A549 (cell line): ENCODE measurements at regions of chr9 and their contacts with region 1.

Region 1: DNA sequence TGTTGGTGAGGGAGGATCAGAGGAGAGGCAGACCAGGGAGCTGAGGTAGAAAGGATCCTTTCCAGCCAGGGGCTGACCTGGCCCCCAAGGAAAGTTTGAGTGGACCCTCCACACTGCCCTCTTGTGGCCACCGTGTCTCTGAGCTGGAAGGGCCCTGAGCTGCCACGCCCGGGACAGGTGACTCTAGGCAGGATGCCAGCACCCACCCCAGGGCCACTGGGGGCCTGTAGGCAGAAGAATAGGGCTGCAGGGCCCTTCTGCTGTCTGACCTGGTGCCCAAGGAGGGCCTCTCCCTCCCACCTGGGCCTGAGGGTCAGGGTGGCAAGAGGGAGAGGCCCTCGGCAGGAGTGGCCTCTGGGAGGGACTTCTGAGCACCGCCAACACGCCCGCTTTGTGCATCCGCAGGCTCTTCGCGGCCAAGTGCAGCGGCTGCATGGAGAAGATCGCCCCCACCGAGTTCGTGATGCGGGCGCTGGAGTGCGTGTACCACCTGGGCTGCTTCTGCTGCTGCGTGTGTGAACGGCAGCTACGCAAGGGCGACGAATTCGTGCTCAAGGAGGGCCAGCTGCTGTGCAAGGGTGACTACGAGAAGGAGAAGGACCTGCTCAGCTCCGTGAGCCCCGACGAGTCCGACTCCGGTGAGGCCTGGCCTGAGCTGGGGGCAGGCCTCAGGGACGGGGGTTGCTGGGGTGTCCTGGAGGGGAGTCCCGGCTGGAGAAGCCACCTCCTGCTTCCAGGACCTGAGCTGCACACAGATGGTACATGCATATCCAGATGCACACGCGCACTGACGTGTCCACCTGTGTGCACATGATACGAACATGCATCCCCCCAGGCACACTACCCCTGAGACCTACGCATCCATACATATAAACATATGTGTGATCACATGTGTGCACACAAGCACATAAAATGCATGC is 77.0 kb downstream of the LMX1B start:
- DNase-seq: peak; percentile 51 to 76
- ATAC-seq: peak; percentile 51 to 87; a peak in 4 of 6 replicates
- H3K4me3 ChIP-seq: no peak overlapping the region
- H3K27ac ChIP-seq: no peak overlapping the region
- H3K4me1 ChIP-seq: no peaks in the 10 kb centered on the region
- CTCF ChIP-seq: peak; percentile 71
- EP300 ChIP-seq: no peak
- POLR2A ChIP-seq: no peak
- RAD21 ChIP-seq: peak; percentile 37 to 49; a peak in 4 of 5 replicates

Region 2: DNA sequence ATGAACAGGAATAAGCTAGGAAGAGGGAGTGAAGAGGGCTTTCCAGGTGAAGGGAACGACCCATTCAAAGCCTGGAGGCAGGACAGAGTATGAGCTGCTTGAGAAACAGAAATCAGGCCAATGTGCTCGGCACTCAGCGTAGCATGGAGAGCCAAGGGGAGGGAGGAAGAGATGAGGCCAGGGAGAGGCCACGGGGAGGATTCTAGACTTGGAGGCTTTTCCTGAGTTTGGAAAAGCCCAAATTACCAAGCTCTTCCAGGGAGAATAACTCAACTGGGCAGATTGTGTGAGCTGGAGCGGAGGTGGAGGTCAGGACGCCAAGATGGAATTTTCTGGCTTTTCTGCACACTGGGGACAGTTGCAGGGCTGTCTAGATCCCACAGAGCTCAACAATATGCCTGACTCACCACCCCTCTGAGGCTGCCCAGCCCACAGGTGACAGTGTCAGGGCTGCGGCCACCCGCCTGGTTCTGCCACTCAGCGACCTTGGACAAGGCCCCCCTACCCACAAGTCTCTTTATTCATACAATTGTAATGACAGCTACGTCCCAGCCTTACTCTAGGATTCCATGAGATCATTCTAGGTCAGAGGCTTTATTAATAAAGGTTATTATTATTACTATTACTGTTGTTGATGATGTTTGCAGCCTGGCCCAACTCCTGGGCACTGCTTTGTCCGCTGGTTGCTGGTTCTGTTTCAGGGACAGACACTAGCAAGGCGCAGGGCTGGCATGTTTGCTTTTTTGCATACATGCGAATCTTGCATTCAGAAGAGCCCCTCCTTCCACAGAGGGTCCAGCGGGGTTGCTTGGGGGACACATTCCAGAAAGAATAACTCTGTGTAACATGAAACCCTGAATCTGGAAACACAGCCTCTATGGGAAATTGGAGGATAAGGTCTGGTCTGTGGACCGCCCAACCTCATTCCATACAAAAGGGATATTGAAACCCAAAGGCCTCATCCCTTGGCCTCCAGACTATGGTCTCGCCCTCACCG is 86.3 kb before region 1 on chr9:
- CTCF ChIA-PET with region 1: interaction called, 46 read pairs
- POLR2A ChIA-PET with region 1: no interaction called
- DNase-seq: no peak
- ATAC-seq: no peak
- H3K4me3 ChIP-seq: no peak overlapping the region
- H3K27ac ChIP-seq: no peak overlapping the region
- H3K4me1 ChIP-seq: no peaks in the 10 kb centered on the region
- CTCF ChIP-seq: no peak
- EP300 ChIP-seq: no peak
- POLR2A ChIP-seq: no peak
- RAD21 ChIP-seq: no peak

Region 3: GRCh38 chr9:126650404-126651341 is 40.0 kb before region 1 on chr9:
- CTCF ChIA-PET with region 1: interaction called, 11 read pairs
- POLR2A ChIA-PET with region 1: no interaction called
- DNase-seq: no peak
- ATAC-seq: no peak
- H3K4me3 ChIP-seq: no peak overlapping the region
- H3K27ac ChIP-seq: no peak overlapping the region
- H3K4me1 ChIP-seq: no peaks in the 10 kb centered on the region
- CTCF ChIP-seq: no peak
- EP300 ChIP-seq: no peak
- POLR2A ChIP-seq: no peak
- RAD21 ChIP-seq: no peak

Region 4: DNA sequence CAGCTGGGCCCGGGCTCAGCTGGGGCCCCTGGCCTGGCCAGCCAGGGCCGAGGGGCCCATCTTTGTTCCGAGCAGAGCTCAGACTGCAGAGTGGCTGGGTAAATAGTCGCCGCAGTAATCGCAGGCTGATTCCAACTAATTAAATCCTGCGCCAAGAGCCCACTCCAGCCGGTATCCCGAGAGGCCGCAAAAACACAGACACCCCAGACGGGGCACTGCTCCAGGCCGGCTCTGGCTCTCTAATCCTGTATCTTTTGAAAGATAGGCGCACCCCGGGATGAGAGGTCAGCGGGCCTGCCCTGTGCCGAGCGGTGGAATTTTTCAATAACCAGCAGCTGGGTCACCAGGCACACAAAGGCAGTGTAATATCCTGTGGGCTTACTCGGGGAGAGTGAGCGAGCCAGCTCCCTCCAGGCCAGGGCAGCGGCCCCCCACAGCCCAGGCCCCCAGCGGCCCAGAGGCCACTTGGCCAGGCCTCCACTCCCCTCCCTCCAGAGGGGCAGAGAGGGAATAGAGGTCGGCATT is 19.2 kb before region 1 on chr9:
- CTCF ChIA-PET with region 1: interaction called, 58 read pairs
- POLR2A ChIA-PET with region 1: no interaction called
- DNase-seq: no peak
- ATAC-seq: no peak
- H3K4me3 ChIP-seq: no peak overlapping the region
- H3K27ac ChIP-seq: no peak overlapping the region
- H3K4me1 ChIP-seq: no peaks in the 10 kb centered on the region
- CTCF ChIP-seq: no peak
- EP300 ChIP-seq: no peak
- POLR2A ChIP-seq: no peak
- RAD21 ChIP-seq: no peak

Region 5: DNA sequence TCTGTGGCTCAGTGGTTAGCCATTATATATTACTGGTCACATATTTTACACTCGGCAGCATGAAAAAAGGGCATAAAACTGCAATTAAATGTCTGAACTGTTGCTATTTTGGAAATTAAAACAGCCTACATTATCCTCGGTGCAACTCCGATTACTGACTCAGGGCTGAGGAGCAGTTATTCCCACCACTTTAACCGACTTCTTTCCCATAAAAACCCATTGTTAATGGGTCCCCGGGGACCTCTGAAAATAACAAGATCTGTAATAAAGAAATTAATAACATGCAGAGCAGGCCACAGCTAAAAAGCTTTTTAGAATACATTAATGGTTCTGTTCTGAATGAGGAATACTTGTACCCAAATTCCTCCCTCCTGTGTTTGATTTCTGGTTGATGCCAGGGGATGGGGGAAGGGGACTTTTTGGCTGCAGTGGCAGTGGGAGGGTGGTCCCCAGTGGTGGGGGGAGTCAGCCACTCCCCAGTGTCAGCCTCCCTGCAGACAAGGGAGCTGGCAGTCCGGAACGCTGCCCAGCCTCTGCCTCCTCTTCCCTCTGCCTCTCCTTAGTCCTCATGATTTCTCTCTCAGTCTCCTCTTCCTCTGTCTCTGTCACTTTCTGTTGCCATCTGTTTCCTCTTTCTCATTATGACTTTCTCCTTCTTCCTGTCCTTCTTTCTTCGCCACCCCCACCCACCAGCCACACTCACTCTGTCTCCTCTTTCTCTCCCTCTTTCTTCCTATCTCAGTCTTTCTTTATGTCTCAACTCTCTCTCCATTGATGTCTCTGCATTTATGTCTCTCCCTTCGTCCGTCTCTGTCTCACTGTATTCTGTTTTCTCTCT is 55.1 kb after region 1 on chr9:
- CTCF ChIA-PET with region 1: no interaction called
- POLR2A ChIA-PET with region 1: no interaction called
- DNase-seq: no peak
- ATAC-seq: no peak; a peak in 1 of 6 replicates
- H3K4me3 ChIP-seq: no peak overlapping the region
- H3K27ac ChIP-seq: no peak overlapping the region
- H3K4me1 ChIP-seq: no peaks in the 10 kb centered on the region
- CTCF ChIP-seq: no peak
- EP300 ChIP-seq: no peak
- POLR2A ChIP-seq: no peak
- RAD21 ChIP-seq: no peak

Region 6: GRCh38 chr9:126781186-126782052 is 90.7 kb after region 1 on chr9:
- CTCF ChIA-PET with region 1: interaction called, 22 read pairs
- POLR2A ChIA-PET with region 1: no interaction called
- DNase-seq: peak; percentile 73 to 78
- ATAC-seq: peak; percentile 92 to 98
- H3K4me3 ChIP-seq: peak overlapping the region; percentile 32
- H3K27ac ChIP-seq: peak overlapping the region; percentile 64 to 83; a peak in 5 of 6 replicates
- H3K4me1 ChIP-seq: 0 out of 3 replicates have a peak, but pooled peaks cover 4% of the 10 kb centered on the region
- CTCF ChIP-seq: peak; percentile 92
- EP300 ChIP-seq: no peak
- POLR2A ChIP-seq: no peak
- RAD21 ChIP-seq: peak; percentile 92 to 97